Endothelial cell of umbilical vein (primary cell): ENCODE measurements at regions of chr22 and their contacts with region 1.

Region 1: DNA sequence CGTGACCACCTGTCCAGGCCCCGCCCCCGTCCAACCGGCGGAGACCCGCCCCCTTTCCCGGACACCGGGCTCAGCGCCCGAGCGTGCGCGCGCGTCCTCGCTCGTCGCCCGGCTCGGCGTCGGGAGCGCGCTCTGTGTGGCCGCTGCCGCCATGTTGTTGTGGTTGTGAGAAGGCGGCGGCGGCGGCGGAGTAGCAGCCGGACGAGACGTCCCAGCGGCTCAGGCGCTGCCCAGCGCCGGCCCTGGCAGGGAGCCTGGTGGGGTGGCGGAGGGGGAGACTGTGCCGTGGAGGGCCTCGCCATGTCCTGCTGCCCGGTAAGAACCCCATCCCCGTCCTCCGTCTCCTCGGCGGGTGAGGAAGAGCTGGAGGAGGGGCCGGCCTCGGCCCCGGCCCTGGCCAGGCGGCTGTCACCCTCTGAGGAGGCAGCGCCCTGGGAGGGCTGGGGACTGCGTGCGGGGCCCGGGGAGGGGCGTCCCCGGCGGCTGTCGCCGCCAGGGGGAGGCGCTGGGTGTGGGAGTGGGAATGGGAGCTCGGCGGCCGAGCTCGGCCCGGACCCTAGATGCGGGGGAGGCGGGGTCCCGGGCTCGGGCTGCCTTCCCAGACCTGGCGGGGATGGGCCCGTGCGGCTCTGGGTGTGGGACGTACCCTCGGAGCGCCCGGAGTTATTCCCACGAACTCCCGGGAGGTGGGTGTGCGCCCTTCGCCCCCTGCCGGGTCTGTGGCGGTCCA is at the start of gene MTMR3:
- DNase-seq: peak; percentile 91
- H3K4me3 ChIP-seq: peak within 1 kb of the TSS; percentile 42 to 81 (median 59)
- H3K27ac ChIP-seq: peak within 1 kb of the TSS; percentile 58
- H3K4me1 ChIP-seq: peaks cover 4% of the 10 kb centered on the region
- H3K27me3 ChIP-seq: no peaks in the 10 kb centered on the region
- CTCF ChIP-seq: peak; percentile 34 to 61
- POLR2A ChIP-seq: no peak
- total RNA-seq, gene MTMR3: 30.1 and 31.5 TPM in 2 replicates

Region 2: GRCh38 chr22:29766632-29767170 is 116.5 kb before region 1 on chr22 and contains the start of gene ZMAT5:
- CTCF ChIA-PET with region 1: no interaction called
- POLR2A ChIA-PET with region 1: no interaction called
- dilution Hi-C with region 1: no loop called
- intact Hi-C with region 1: loop called (anchors 2 kb)
- DNase-seq: peak; percentile 96
- H3K4me3 ChIP-seq: peak within 1 kb of the TSS; percentile 44 to 98 (median 81)
- H3K27ac ChIP-seq: peak within 1 kb of the TSS; percentile 67
- H3K4me1 ChIP-seq: peaks cover 12% of the 10 kb centered on the region
- H3K27me3 ChIP-seq: no peaks in the 10 kb centered on the region
- CTCF ChIP-seq: no peak
- POLR2A ChIP-seq: peak; percentile 27
- total RNA-seq, gene ZMAT5: 23.1 and 24.9 TPM in 2 replicates

Region 3: GRCh38 chr22:29837780-29838598 is 45.2 kb before region 1 on chr22 and contains the start of gene ASCC2:
- CTCF ChIA-PET with region 1: no interaction called
- POLR2A ChIA-PET with region 1: no interaction called
- dilution Hi-C with region 1: no loop called
- intact Hi-C with region 1: loop called (anchors 1 kb)
- DNase-seq: peak; percentile 97
- H3K4me3 ChIP-seq: peak within 1 kb of the TSS; percentile 79 to 92 (median 86)
- H3K27ac ChIP-seq: peak within 1 kb of the TSS; percentile 63
- H3K4me1 ChIP-seq: peaks cover 15% of the 10 kb centered on the region
- H3K27me3 ChIP-seq: no peaks in the 10 kb centered on the region
- CTCF ChIP-seq: no peak
- POLR2A ChIP-seq: peak; percentile 88
- total RNA-seq, gene ASCC2: 60.4 and 60.7 TPM in 2 replicates

Region 4: DNA sequence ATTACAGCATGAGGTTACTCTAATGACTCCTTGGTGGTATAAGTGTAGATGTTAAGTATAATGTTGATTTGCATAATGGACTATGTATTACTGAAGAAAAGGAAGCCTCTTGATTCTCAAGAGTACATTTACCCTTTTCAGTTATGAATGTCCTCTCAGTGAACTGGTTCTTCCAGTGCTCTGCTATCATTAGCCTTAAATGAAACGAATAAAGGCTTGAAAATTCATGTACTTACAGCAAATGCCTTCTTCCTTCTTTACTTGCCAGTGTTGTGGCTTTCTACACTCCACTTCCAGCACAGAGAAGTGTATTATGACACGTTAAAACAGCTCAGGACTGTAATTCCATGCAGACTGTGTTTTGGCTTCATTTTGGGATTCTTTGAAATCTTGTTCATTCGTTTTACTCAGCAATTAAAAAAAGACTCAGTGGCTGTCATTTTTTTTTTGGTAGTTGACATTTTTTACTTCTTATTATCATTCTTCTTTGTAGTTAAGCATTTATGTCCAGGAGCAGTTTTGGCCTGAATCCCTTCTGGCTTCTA is 96.6 kb after region 1 on chr22:
- CTCF ChIA-PET with region 1: interaction called, 3 read pairs
- POLR2A ChIA-PET with region 1: no interaction called
- dilution Hi-C with region 1: no loop called
- intact Hi-C with region 1: loop called (anchors 10 kb)
- DNase-seq: no peak
- H3K4me3 ChIP-seq: no peak overlapping the region
- H3K27ac ChIP-seq: no peak overlapping the region
- H3K4me1 ChIP-seq: peaks cover 9% of the 10 kb centered on the region
- H3K27me3 ChIP-seq: no peaks in the 10 kb centered on the region
- CTCF ChIP-seq: no peak
- POLR2A ChIP-seq: no peak

Region 5: GRCh38 chr22:30079952-30080533 is 196.8 kb after region 1 on chr22 and contains the start of gene HORMAD2:
- CTCF ChIA-PET with region 1: no interaction called
- POLR2A ChIA-PET with region 1: no interaction called
- dilution Hi-C with region 1: no loop called
- intact Hi-C with region 1: loop called (anchors 10 kb)
- DNase-seq: peak; percentile 22
- H3K4me3 ChIP-seq: peak within 1 kb of the TSS in 1 of 3 experiments; percentile 25
- H3K27ac ChIP-seq: no peak within 1 kb of the TSS
- H3K4me1 ChIP-seq: no peaks in the 10 kb centered on the region
- H3K27me3 ChIP-seq: peaks cover 11 to 15% of the 10 kb centered on the region in 2 experiments
- CTCF ChIP-seq: no peak
- POLR2A ChIP-seq: no peak
- total RNA-seq, gene HORMAD2: not detected in 2 replicates